Psoas muscle (tissue), 8 donors: ENCODE measurements at regions of chr12 and their contacts with region 1.

Region 1: DNA sequence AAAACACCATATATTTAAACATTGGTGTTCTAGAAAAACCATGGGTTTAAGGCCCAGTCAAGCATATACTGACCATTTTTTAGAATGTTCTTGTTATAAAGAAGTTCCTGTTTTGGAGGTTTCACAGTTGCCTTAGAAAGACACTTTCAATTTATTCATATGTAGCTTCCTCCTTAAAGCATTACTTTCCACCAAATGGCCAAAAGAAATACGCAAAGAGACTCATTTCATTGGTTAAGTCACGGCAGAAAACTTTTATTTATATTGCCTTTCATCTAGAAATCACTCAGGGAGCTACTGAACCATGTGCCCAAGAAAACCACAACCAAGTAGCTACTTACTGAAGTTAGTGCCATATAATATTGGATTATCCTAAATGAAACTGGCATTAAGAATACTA is 40.0 kb downstream of the MYBPC1 start:
- DNase-seq: no peak
- ATAC-seq: no peak
- H3K4me3 ChIP-seq: no peak overlapping the region
- H3K27ac ChIP-seq: peak overlapping the region; percentile 2
- H3K4me1 ChIP-seq: peaks cover 7% of the 10 kb centered on the region
- H3K27me3 ChIP-seq: no peaks in the 10 kb centered on the region
- CTCF ChIP-seq: no peak

Region 2: GRCh38 chr12:100251917-100252316 is 1382.8 kb before region 1 on chr12:
- intact Hi-C with region 1: no loop called
- DNase-seq: no peak
- ATAC-seq: no peak
- H3K4me3 ChIP-seq: no peak overlapping the region
- H3K27ac ChIP-seq: no peak overlapping the region
- H3K4me1 ChIP-seq: no peaks in the 10 kb centered on the region
- H3K27me3 ChIP-seq: no peaks in the 10 kb centered on the region
- CTCF ChIP-seq: no peak

Region 3: DNA sequence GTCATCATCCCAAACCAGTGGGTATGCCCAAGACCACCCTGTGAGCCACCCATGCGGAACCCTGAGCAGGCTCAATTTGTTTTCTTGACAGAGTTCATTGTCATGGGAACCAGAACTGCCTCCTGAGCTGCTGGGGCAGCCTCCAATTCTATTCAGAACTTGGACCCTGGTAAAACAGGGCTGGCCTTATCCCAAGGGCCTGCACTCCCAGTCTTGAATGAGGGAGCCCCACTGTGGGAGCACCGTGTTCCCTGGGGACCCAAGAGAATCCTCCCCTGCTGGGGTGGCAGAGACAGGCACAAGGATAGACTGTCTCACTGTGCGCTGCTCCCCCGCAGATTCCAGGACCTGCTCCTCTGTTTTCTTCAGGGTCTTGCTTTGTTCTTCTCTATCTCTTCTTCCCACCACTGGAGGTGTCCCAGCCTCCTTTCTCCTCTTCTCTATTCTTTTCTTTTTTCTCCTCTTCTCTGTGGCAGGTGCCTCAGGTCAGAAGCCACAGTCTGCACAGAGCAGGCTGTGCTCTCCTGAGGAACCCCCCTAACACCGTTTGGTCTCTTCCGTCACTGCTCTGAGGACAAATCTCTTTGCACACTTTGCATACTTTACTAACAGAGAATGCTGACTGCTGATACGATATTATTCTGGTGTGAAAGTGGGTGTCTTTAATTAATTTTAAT is 31.5 kb after region 1 on chr12:
- intact Hi-C with region 1: loop called in 1 of 2 experiments (anchors 5 kb)
- DNase-seq: no peak
- ATAC-seq: peak in 2 of 4 donors; percentile 10 to 14
- H3K4me3 ChIP-seq: no peak overlapping the region
- H3K27ac ChIP-seq: peak overlapping the region; percentile 7
- H3K4me1 ChIP-seq: no peaks in the 10 kb centered on the region
- H3K27me3 ChIP-seq: no peaks in the 10 kb centered on the region
- CTCF ChIP-seq: no peak